Activated T-helper 2 cell treated with anti-CD3 and anti-CD28 coated beads, Interferon-gamma antibody, Interleukin-2, Interleukin-4, amounts not matched to agents 10 μg/mL and 5 μg/mL and 100 μg/mL, durations not matched to agents 14 hours and 24 hours and 36 hours (primary cell): ENCODE measurements at regions of chr17 and their contacts with region 1.

Region 1: GRCh38 chr17:40287494-40288369 is at the start of gene CDC6:
- DNase-seq: peak; percentile 99
- H3K4me3 Mint-ChIP-seq: peak within 1 kb of the TSS; percentile 100
- H3K27ac Mint-ChIP-seq: peak within 1 kb of the TSS; percentile 98
- H3K4me1 Mint-ChIP-seq: peaks cover 48% of the 10 kb centered on the region
- H3K27me3 Mint-ChIP-seq: no peaks in the 10 kb centered on the region
- total RNA-seq, gene CDC6: 126 and 133 TPM in 2 replicates

Region 2: GRCh38 chr17:40203131-40203530 is 84.6 kb before region 1 on chr17:
- intact Hi-C with region 1: loop called (anchors 1 kb)
- DNase-seq: no peak
- H3K4me3 Mint-ChIP-seq: no peak overlapping the region
- H3K27ac Mint-ChIP-seq: no peak overlapping the region
- H3K4me1 Mint-ChIP-seq: peaks cover 3% of the 10 kb centered on the region
- H3K27me3 Mint-ChIP-seq: peaks cover 10% of the 10 kb centered on the region

Region 3: DNA sequence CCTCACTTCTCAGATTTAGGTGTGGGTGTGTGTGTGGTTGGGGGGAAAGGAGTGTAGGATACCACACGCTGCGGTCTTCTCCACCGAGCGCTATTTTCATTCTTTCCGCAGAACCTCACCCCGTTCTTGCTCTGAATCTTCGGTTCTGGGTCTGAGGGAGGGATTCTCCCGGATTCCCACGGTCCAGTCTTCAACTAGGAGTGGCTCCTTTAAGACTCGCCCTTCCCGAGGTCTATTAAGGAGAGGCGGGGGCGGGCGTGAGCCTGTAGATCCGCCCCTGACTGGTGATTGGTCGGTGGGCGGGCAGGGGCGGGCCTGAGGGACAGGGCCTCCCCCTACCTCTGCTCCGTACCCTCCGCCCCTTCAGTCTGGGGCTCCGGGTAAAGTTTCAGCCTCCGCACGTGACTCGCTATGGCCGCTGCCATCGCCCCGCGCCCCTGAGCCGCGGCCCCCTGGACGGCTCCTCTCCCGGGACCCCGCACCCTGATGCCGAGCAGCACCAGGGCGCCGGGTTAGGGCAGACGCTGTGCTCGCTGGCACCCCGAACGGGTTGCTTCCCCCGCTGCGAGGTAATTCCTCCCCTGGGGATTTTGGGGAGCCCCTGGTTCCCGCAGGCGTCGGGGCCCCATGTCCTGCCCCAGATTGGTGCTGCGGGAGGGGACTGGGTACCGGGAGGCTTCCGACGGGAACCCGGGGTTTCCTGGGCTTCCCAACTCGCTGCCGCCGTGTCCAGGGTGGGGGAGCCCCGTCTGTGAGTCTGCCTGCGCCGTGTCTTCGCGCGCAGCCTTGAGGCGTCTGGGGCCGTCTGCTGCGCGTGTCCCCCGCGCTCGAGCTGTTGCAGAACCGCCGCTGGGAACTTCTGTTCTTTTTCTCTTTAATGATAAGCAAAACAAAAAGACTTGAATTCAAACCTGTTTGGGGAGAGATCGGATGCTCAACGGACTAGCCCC is 30.4 kb after region 1 on chr17:
- intact Hi-C with region 1: loop called (anchors 2 kb)
- DNase-seq: peak; percentile 87
- H3K4me3 Mint-ChIP-seq: peak overlapping the region; percentile 92
- H3K27ac Mint-ChIP-seq: peak overlapping the region; percentile 81
- H3K4me1 Mint-ChIP-seq: peaks cover 58% of the 10 kb centered on the region
- H3K27me3 Mint-ChIP-seq: no peaks in the 10 kb centered on the region

Region 4: DNA sequence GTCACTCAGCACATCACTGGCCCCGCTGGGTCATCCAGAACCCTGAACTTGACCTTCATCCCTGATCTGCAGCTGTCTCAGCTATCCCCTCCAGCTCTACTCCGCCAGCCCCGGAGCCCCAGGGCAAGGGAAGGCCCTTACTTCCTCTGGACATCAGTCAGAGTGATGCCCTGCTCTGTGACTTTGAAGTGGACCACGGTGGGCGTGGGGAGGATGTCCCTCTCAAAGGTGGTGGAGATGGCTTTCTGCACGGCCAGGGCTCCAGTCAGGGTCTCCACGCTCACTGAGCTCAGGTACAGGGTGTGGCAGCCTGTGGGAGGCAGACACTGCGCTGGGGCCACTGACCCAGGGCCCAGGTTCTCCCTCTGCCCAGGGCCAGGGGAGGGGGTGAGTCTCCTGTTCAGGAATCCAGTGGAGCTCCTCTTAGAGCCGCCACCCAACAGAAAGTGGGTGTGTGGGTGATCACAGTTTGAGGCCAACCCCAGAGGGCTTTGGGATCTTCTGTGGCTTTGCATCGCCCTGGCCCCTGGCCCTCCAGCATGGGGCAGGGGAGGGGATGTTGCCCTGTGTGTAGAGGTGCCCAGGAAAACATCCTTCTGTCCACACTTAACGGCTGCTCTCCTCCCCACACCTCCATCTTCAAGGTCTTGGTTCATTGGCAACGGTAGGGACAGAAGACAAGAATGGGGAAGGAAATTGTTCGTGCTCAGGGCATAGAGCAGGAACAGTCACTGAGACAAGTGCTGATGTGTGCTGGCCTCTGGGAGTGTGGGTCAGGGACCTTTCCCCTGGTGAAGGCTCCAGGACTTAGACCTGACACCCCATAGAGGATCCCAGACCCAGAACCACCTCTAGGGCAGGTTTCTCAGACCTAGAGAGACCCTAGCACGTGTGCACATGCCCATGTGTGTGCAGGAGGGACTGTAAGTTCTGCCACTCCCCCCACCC is 192.1 kb after region 1 on chr17:
- intact Hi-C with region 1: no loop called
- DNase-seq: no peak
- H3K4me3 Mint-ChIP-seq: peak overlapping the region; percentile 73
- H3K27ac Mint-ChIP-seq: peak overlapping the region; percentile 96
- H3K4me1 Mint-ChIP-seq: peaks cover 63% of the 10 kb centered on the region
- H3K27me3 Mint-ChIP-seq: no peaks in the 10 kb centered on the region